Mammary epithelial cell (primary cell): ENCODE measurements at regions of chr6 and their contacts with region 1.

Region 1: DNA sequence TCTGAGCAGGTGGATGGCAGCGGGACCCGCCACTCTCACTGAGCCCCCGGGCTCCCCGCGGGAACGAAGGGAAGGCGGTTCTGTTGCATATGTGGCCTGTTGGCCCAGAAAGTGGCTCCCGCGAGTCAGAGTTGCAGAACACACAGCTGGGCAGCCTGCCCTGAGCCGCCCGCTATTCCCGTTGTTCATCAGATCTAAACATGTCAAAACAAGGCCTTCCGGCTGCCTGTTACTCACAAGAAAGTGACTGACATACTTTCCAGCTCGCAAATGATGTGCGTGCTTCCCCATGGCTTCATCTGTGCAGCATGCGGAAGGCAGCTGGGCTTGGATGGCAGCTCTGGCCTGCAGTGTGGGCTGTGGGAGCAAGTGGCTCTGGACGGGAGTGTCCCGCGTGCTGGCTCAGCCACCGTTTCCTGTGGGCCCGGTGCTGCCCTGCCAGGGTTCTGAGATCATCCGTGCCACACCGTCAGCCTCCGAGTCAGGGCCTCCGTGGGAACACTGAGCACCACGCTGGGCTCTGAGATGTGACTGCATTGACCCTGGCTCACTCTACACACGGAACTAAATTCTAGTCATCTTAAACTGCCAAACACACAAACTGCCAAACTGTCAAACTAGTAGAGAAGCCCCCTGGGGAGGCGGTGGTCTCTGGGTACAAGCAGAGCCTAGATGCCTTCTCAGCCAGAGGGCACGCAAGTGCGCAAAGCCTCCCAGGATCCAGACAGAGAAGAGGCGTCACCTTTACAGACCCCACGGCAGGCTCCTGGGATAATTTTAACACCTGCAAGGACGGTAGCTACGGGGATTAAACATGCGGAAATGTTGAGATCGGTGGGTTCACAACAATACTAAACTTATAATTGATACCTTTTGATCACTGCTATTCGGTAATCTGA is 227.4 kb downstream of the ERMARD start:
- DNase-seq: peak; percentile 92
- H3K4me3 ChIP-seq: no peak overlapping the region
- H3K27ac ChIP-seq: peak overlapping the region; percentile 55
- H3K4me1 ChIP-seq: peaks cover 39% of the 10 kb centered on the region
- H3K27me3 ChIP-seq: peaks cover 2% of the 10 kb centered on the region
- CTCF ChIP-seq: peak in 1 of 2 donors; percentile 23

Region 2: GRCh38 chr6:169789982-169790927 is 188.6 kb before region 1 on chr6:
- CTCF ChIA-PET with region 1: no interaction called
- dilution Hi-C with region 1: no loop called
- in situ Hi-C with region 1: no loop called
- intact Hi-C with region 1: loop called (anchors 2 kb)
- DNase-seq: peak; percentile 72
- H3K4me3 ChIP-seq: peak overlapping the region; percentile 56 to 57 (median 56)
- H3K27ac ChIP-seq: no peak overlapping the region
- H3K4me1 ChIP-seq: peaks cover 17% of the 10 kb centered on the region
- H3K27me3 ChIP-seq: no peaks in the 10 kb centered on the region
- CTCF ChIP-seq: peak; percentile 98 to 99

Region 3: GRCh38 chr6:170025935-170026750 is 47.3 kb after region 1 on chr6:
- CTCF ChIA-PET with region 1: no interaction called
- dilution Hi-C with region 1: no loop called
- in situ Hi-C with region 1: no loop called
- intact Hi-C with region 1: loop called (anchors 1 kb)
- DNase-seq: peak; percentile 96
- H3K4me3 ChIP-seq: no peak overlapping the region
- H3K27ac ChIP-seq: peak overlapping the region; percentile 74
- H3K4me1 ChIP-seq: peaks cover 25% of the 10 kb centered on the region
- H3K27me3 ChIP-seq: no peaks in the 10 kb centered on the region
- CTCF ChIP-seq: no peak

Region 4: DNA sequence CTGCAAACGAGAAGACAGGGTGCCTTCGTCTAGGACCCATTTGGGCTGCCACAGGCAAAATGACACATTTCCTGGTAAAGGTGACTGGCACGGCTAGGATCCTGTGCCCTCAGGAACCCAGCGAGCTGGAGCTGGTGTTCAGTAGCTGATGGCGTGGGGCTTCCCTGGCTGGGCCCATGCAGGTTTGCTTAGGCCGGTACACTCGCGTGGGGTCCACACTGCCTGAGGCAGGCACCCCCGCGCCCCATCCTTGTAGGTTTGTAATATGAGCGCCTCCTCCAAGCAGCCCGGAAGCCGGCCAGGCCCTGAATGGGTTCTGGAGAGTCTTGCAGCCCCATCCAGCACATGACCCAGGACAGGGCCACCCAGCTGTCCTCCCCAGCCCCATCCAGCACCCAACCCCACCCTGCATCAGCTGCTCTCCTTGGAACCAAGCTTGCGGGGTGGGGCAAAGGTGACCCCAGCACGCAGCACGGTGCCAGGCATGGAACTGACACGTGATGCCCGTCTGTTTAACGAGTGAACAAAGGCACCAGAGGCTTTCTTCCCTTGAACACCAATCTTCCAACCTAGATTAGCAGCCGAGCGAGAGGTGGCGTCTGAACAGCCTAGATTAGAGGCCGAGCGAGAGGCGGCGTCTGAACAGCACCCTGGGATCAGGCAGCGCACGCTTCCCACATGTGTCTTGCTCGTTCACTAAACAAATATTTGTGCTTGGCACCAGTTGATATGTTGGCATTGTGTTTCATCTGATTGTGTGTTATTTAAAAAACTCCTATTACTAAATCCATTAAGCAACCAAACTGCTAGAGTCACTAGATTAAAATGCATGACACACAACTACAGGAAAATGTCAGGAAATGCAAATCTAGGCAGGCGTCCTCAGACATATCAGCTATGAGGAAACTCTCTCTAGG is 200.0 kb after region 1 on chr6:
- CTCF ChIA-PET with region 1: no interaction called
- dilution Hi-C with region 1: no loop called
- in situ Hi-C with region 1: no loop called
- intact Hi-C with region 1: loop called (anchors 10 kb)
- DNase-seq: peak; percentile 69
- H3K4me3 ChIP-seq: no peak overlapping the region
- H3K27ac ChIP-seq: no peak overlapping the region
- H3K4me1 ChIP-seq: peaks cover 17% of the 10 kb centered on the region
- H3K27me3 ChIP-seq: no peaks in the 10 kb centered on the region
- CTCF ChIP-seq: no peak